ENCODE measurements at regions of chr7 and their contacts with region 1.

Region 1: GRCh38 chr7:27616914-27617548 is 45.7 kb downstream of the HIBADH start:
- DNase-seq: peak; percentile 30
- H3K4me3 ChIP-seq: no peak overlapping the region
- H3K27ac ChIP-seq: no peak overlapping the region
- H3K4me1 ChIP-seq: no peaks in the 10 kb centered on the region
- H3K27me3 ChIP-seq: no peaks in the 10 kb centered on the region
- CTCF ChIP-seq: no peak

Region 2: GRCh38 chr7:27527348-27527714 is 89.7 kb before region 1 on chr7:
- CTCF ChIA-PET with region 1: no interaction called
- dilution Hi-C with region 1: loop called (anchors 5 kb)
- in situ Hi-C with region 1: no loop called
- intact Hi-C with region 1: no loop called
- DNase-seq: no peak
- H3K4me3 ChIP-seq: no peak overlapping the region
- H3K27ac ChIP-seq: no peak overlapping the region
- H3K4me1 ChIP-seq: no peaks in the 10 kb centered on the region
- H3K27me3 ChIP-seq: no peaks in the 10 kb centered on the region
- CTCF ChIP-seq: no peak

Region 3: GRCh38 chr7:27812703-27813102 is 195.7 kb after region 1 on chr7:
- CTCF ChIA-PET with region 1: no interaction called
- dilution Hi-C with region 1: no loop called
- in situ Hi-C with region 1: no loop called
- intact Hi-C with region 1: no loop called
- DNase-seq: no peak
- H3K4me3 ChIP-seq: no peak overlapping the region
- H3K27ac ChIP-seq: no peak overlapping the region
- H3K4me1 ChIP-seq: peaks cover 5% of the 10 kb centered on the region
- H3K27me3 ChIP-seq: no peaks in the 10 kb centered on the region
- CTCF ChIP-seq: no peak

Region 4: GRCh38 chr7:28245123-28245878 is 628.3 kb after region 1 on chr7:
- CTCF ChIA-PET with region 1: no interaction called
- dilution Hi-C with region 1: no loop called
- in situ Hi-C with region 1: no loop called
- intact Hi-C with region 1: no loop called
- DNase-seq: no peak
- H3K4me3 ChIP-seq: no peak overlapping the region
- H3K27ac ChIP-seq: no peak overlapping the region
- H3K4me1 ChIP-seq: no peaks in the 10 kb centered on the region
- H3K27me3 ChIP-seq: no peaks in the 10 kb centered on the region
- CTCF ChIP-seq: no peak

Region 5: GRCh38 chr7:28405662-28406061 is 788.6 kb after region 1 on chr7:
- CTCF ChIA-PET with region 1: no interaction called
- dilution Hi-C with region 1: no loop called
- in situ Hi-C with region 1: no loop called
- intact Hi-C with region 1: no loop called
- DNase-seq: peak; percentile 97
- H3K4me3 ChIP-seq: no peak overlapping the region
- H3K27ac ChIP-seq: peak overlapping the region; percentile 50
- H3K4me1 ChIP-seq: peaks cover 36% of the 10 kb centered on the region
- H3K27me3 ChIP-seq: no peaks in the 10 kb centered on the region
- CTCF ChIP-seq: no peak